Heart left ventricle (tissue), 16 donors: ENCODE measurements at regions of chr1 and their contacts with region 1.

Region 1: GRCh38 chr1:150281837-150282653 is at the start of gene CIART:
- DNase-seq: peak; percentile 90 to 97 (median 95)
- ATAC-seq: peak; percentile 96 to 98 (median 97)
- H3K4me3 ChIP-seq: peak within 1 kb of the TSS; percentile 44 to 98 (median 63)
- H3K27ac ChIP-seq: peak within 1 kb of the TSS; percentile 82 to 98 (median 93)
- H3K4me1 ChIP-seq: peaks cover 0 to 34% (median 21%) of the 10 kb centered on the region in 12 donors
- H3K27me3 ChIP-seq: no peaks in the 10 kb centered on the region
- CTCF ChIP-seq: no peak
- POLR2A ChIP-seq: no peak
- total RNA-seq, gene CIART: 2.3 to 23.9 (median 7.1) TPM

Region 2: GRCh38 chr1:149962123-149962548 is 319.9 kb before region 1 on chr1:
- intact Hi-C with region 1: no loop called
- DNase-seq: peak in 3 of 5 donors; percentile 34 to 45 (median 45)
- ATAC-seq: peak; percentile 74 to 91 (median 83)
- H3K4me3 ChIP-seq: no peak overlapping the region
- H3K27ac ChIP-seq: peak overlapping the region in 8 of 12 donors; percentile 21 to 47 (median 42)
- H3K4me1 ChIP-seq: peaks cover 0 to 24% (median 7%) of the 10 kb centered on the region in 12 donors
- H3K27me3 ChIP-seq: peaks cover 0 to 6% (median 0%) of the 10 kb centered on the region in 9 donors
- CTCF ChIP-seq: peak; percentile 69 to 87 (median 81)
- POLR2A ChIP-seq: no peak

Region 3: DNA sequence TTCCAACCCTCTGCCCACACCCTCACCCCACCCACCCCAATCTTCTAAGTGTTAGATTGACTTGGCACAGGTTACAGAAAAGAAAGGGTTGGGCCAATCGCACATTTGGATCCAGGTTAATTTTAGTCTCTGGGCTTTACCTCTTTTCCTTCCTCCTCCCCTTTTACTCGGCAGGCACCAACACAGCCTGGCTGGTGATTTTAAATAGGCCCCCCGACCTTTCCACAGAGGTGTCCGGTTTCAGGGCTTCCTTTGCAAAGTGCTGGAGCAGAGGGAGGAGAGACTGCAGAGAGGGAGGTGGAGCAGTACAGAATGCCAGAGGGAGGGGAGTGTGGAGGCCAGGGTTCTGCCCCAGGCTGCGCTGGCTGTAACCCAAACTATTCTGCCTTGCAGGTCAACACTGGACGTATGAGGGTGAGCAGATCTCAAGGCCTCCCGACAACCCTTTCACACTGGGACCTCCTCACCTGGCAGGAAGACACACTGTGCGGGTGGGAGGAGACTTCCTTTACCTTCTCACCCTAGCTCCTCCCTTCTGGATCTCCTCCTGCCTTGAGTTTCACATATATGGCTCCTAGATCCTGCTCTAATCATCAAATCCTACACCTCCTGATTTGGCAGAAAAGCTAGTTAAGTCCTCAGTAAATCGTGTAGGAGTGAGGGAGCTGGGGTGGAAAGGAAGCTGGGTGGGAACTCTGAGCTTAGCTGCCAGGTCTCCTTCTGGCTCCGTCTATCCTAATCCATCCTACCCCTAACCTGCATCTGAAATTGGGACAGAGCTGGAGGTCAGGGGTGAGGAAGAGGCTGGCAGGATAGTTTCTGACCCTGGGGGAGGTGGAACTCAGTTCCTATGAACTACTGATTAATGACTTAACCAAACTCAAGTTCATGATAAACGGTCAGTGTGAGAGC is 22.0 kb before region 1 on chr1:
- intact Hi-C with region 1: loop called in 9 of 10 experiments (anchors 1 to 2 kb)
- DNase-seq: peak in 3 of 5 donors; percentile 32 to 68 (median 43)
- ATAC-seq: peak; percentile 35 to 74 (median 54)
- H3K4me3 ChIP-seq: peak overlapping the region in 2 of 12 donors; percentile 15 to 16
- H3K27ac ChIP-seq: peak overlapping the region in 7 of 12 donors; percentile 2 to 77 (median 46)
- H3K4me1 ChIP-seq: peaks cover 0 to 38% (median 20%) of the 10 kb centered on the region in 12 donors
- H3K27me3 ChIP-seq: peaks cover 0 to 22% (median 0%) of the 10 kb centered on the region in 9 donors
- CTCF ChIP-seq: no peak
- POLR2A ChIP-seq: no peak

Region 4: DNA sequence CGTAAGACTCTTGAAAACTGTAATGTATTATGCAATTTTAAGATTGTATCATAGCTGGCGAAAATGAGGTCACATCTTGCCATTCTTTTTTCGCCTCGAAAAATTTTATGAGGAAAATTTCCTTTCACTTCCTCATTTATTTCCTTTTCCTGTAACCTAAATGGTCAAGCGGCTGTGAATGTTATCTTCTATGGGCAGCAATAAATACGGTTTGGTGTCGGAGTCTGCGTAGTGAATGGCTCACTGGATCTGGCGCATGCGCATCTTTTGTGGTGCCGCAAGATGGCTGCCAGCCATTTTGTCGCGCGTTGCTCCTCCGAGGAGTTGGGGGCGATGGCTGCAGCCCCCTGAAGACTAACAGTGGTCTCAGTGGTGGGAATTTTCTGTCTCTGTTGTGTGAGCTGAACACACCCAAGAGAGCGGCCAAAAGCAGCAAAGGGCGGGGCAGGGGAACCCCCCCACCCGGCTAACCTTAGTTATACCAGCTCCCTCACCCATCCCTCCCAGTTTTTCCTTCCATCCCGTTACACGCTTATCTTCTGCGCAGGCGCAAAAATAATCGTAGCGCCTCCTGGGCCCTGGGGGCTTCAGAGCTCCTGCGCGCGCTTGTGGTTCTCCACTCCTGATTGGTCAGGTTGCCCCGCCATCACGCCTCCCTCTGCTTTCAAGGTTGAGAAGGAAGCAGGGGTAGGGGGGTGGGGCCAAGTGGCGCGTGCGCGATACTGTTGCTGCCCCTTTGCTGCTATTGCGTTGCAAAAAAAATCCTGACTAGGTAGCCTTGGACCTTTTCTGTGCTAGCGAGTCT is 81.6 kb after region 1 on chr1 and contains the start of gene RPRD2:
- intact Hi-C with region 1: loop called in 1 of 10 experiments (anchors 5 kb)
- DNase-seq: peak; percentile 99 to 100 (median 100)
- ATAC-seq: peak; percentile 98 to 99 (median 99)
- H3K4me3 ChIP-seq: peak within 1 kb of the TSS; percentile 27 to 91 (median 72)
- H3K27ac ChIP-seq: peak within 1 kb of the TSS; percentile 92 to 99 (median 98)
- H3K4me1 ChIP-seq: peaks cover 0 to 28% (median 14%) of the 10 kb centered on the region in 12 donors
- H3K27me3 ChIP-seq: no peaks in the 10 kb centered on the region
- CTCF ChIP-seq: peak in 1 of 12 donors; percentile 11
- POLR2A ChIP-seq: peak in 1 of 2 donors; percentile 62
- total RNA-seq, gene RPRD2: 19.4 to 33.4 (median 25.3) TPM